ENCODE measurements at regions of chr21 and their contacts with region 1.

Region 1: GRCh38 chr21:17512253-17513213 is at the start of gene CXADR:
- DNase-seq: peak; percentile 85
- H3K4me3 Mint-ChIP-seq: peak within 1 kb of the TSS; percentile 77
- H3K27ac Mint-ChIP-seq: peak within 1 kb of the TSS; percentile 81
- H3K4me1 Mint-ChIP-seq: peaks cover 18% of the 10 kb centered on the region
- H3K27me3 Mint-ChIP-seq: no peaks in the 10 kb centered on the region
- CTCF ChIP-seq: peak; percentile 71
- total RNA-seq, gene CXADR: 7.9 TPM in 2 replicates

Region 2: GRCh38 chr21:17051054-17051453 is 461.5 kb before region 1 on chr21:
- CTCF ChIA-PET with region 1: no interaction called
- POLR2A ChIA-PET with region 1: no interaction called
- intact Hi-C with region 1: no loop called
- DNase-seq: no peak
- H3K4me3 Mint-ChIP-seq: no peak overlapping the region
- H3K27ac Mint-ChIP-seq: no peak overlapping the region
- H3K4me1 Mint-ChIP-seq: no peaks in the 10 kb centered on the region
- H3K27me3 Mint-ChIP-seq: no peaks in the 10 kb centered on the region
- CTCF ChIP-seq: no peak

Region 3: GRCh38 chr21:17387030-17387617 is 125.4 kb before region 1 on chr21:
- CTCF ChIA-PET with region 1: interaction called, 16 read pairs
- POLR2A ChIA-PET with region 1: interaction called, 7 read pairs
- intact Hi-C with region 1: loop called (anchors 1 kb)
- DNase-seq: peak; percentile 77
- H3K4me3 Mint-ChIP-seq: no peak overlapping the region
- H3K27ac Mint-ChIP-seq: no peak overlapping the region
- H3K4me1 Mint-ChIP-seq: no peaks in the 10 kb centered on the region
- H3K27me3 Mint-ChIP-seq: no peaks in the 10 kb centered on the region
- CTCF ChIP-seq: peak; percentile 68

Region 4: GRCh38 chr21:17446737-17447136 is 65.8 kb before region 1 on chr21:
- CTCF ChIA-PET with region 1: interaction called, 4 read pairs
- POLR2A ChIA-PET with region 1: interaction called, 11 read pairs
- intact Hi-C with region 1: no loop called
- DNase-seq: peak; percentile 72
- H3K4me3 Mint-ChIP-seq: no peak overlapping the region
- H3K27ac Mint-ChIP-seq: peak overlapping the region; percentile 74
- H3K4me1 Mint-ChIP-seq: peaks cover 23% of the 10 kb centered on the region
- H3K27me3 Mint-ChIP-seq: no peaks in the 10 kb centered on the region
- CTCF ChIP-seq: no peak

Region 5: GRCh38 chr21:17461014-17461413 is 51.5 kb before region 1 on chr21:
- CTCF ChIA-PET with region 1: interaction called, 9 read pairs
- POLR2A ChIA-PET with region 1: interaction called, 10 read pairs
- intact Hi-C with region 1: no loop called
- DNase-seq: peak; percentile 86
- H3K4me3 Mint-ChIP-seq: no peak overlapping the region
- H3K27ac Mint-ChIP-seq: peak overlapping the region; percentile 0
- H3K4me1 Mint-ChIP-seq: peaks cover 19% of the 10 kb centered on the region
- H3K27me3 Mint-ChIP-seq: no peaks in the 10 kb centered on the region
- CTCF ChIP-seq: no peak

Region 6: DNA sequence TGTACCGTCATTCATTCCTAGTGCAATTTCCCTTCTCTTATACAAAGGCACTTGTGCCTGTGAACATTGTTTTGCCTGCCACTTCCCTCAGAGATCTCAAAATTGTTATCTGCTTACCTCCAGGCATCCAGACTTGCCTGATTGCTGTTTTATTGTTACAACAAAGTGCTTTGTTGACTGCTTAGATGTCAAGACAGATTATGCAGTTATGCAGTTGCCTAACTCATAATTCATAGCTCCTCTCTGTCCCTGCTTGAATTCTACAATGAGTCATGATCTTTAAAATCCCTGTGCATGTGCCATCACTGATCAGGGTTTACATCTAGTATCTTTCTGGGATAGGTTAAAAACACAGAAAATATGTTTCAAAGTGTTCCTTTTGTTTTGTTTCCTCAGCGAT is 24.8 kb after region 1 on chr21:
- CTCF ChIA-PET with region 1: interaction called, 4 read pairs
- POLR2A ChIA-PET with region 1: interaction called, 20 read pairs
- intact Hi-C with region 1: no loop called
- DNase-seq: peak; percentile 41
- H3K4me3 Mint-ChIP-seq: no peak overlapping the region
- H3K27ac Mint-ChIP-seq: no peak overlapping the region
- H3K4me1 Mint-ChIP-seq: peaks cover 13% of the 10 kb centered on the region
- H3K27me3 Mint-ChIP-seq: no peaks in the 10 kb centered on the region
- CTCF ChIP-seq: no peak

Region 7: GRCh38 chr21:17570786-17571185 is 58.3 kb after region 1 on chr21:
- CTCF ChIA-PET with region 1: no interaction called
- POLR2A ChIA-PET with region 1: no interaction called
- intact Hi-C with region 1: no loop called
- DNase-seq: no peak
- H3K4me3 Mint-ChIP-seq: no peak overlapping the region
- H3K27ac Mint-ChIP-seq: no peak overlapping the region
- H3K4me1 Mint-ChIP-seq: no peaks in the 10 kb centered on the region
- H3K27me3 Mint-ChIP-seq: no peaks in the 10 kb centered on the region
- CTCF ChIP-seq: no peak

Region 8: GRCh38 chr21:17848228-17848627 is 335.7 kb after region 1 on chr21:
- CTCF ChIA-PET with region 1: no interaction called
- POLR2A ChIA-PET with region 1: no interaction called
- intact Hi-C with region 1: no loop called
- DNase-seq: peak; percentile 87
- H3K4me3 Mint-ChIP-seq: peak overlapping the region; percentile 17
- H3K27ac Mint-ChIP-seq: peak overlapping the region; percentile 80
- H3K4me1 Mint-ChIP-seq: peaks cover 7% of the 10 kb centered on the region
- H3K27me3 Mint-ChIP-seq: no peaks in the 10 kb centered on the region
- CTCF ChIP-seq: no peak

Measured in MCF 10A (cell line).